CD8-positive, alpha-beta T cell (primary cell): ENCODE measurements at regions of chr4 and their contacts with region 1.

Region 1: DNA sequence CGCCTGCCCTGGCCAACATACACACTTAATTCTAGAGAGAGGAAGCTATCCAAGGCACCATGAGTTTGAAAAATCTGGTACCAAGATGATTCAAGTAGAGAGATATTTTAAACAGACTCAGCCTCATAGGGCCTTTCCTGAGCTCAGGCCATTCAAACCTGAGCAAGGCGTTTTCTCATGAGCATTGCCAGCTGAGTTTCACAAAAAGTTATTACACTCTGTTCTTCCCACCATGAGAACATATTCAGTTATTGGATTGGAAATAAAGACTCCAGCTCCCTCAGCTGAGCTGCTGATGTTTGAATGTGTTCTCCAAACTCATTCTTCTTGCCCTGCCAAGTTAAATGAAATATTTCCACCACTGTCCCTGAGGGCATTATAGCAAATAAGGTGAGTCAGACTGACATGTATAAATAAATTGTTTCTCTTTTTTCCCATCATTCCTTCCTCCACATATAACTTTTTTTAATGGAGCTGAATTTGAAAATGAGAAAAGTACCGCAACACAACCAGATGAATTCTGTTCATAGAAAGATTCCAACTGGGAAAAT is 429.6 kb downstream of the RAB28 start:
- DNase-seq: no peak
- ATAC-seq: no peak
- H3K4me3 ChIP-seq: no peak overlapping the region
- H3K4me3 Mint-ChIP-seq: no peak overlapping the region
- H3K27ac ChIP-seq: no peak overlapping the region
- H3K27ac Mint-ChIP-seq: no peak overlapping the region
- H3K4me1 ChIP-seq: no peaks in the 10 kb centered on the region
- H3K4me1 Mint-ChIP-seq: no peaks in the 10 kb centered on the region
- H3K27me3 ChIP-seq: no peaks in the 10 kb centered on the region
- H3K27me3 Mint-ChIP-seq: no peaks in the 10 kb centered on the region
- CTCF ChIP-seq: no peak

Region 2: DNA sequence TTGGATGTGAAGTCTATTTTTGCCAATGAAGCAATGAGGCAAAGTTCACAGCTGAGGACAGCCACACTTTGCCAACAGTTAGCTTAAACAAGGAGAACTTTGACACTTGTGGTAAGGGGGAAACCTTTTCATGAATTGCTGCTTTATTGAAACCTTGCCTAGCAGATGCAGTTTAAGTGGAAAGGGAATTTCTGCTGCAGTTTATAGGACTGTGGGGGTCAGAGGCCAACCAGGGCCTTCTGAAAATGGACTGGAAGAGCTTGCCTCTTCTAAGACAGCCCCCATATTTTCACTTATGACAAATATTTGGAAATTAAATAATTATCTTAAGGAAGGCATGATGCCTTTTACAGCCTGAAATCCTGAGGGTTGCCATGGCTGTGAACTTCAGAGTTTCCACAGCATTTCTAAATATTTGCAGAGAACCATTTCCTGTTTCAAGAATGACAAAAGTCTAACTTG is 120.7 kb before region 1 on chr4:
- CTCF ChIA-PET with region 1: no interaction called
- POLR2A ChIA-PET with region 1: no interaction called
- intact Hi-C with region 1: no loop called
- DNase-seq: no peak
- ATAC-seq: no peak
- H3K4me3 ChIP-seq: no peak overlapping the region
- H3K4me3 Mint-ChIP-seq: no peak overlapping the region
- H3K27ac ChIP-seq: no peak overlapping the region
- H3K27ac Mint-ChIP-seq: no peak overlapping the region
- H3K4me1 ChIP-seq: no peaks in the 10 kb centered on the region
- H3K4me1 Mint-ChIP-seq: no peaks in the 10 kb centered on the region
- H3K27me3 ChIP-seq: no peaks in the 10 kb centered on the region
- H3K27me3 Mint-ChIP-seq: no peaks in the 10 kb centered on the region
- CTCF ChIP-seq: no peak

Region 3: GRCh38 chr4:13126976-13127910 is 72.7 kb after region 1 on chr4:
- CTCF ChIA-PET with region 1: no interaction called
- POLR2A ChIA-PET with region 1: no interaction called
- intact Hi-C with region 1: loop called in 1 of 2 experiments (anchors 2 kb)
- DNase-seq: no peak
- ATAC-seq: no peak
- H3K4me3 ChIP-seq: no peak overlapping the region
- H3K4me3 Mint-ChIP-seq: no peak overlapping the region
- H3K27ac ChIP-seq: no peak overlapping the region
- H3K27ac Mint-ChIP-seq: no peak overlapping the region
- H3K4me1 ChIP-seq: no peaks in the 10 kb centered on the region
- H3K4me1 Mint-ChIP-seq: no peaks in the 10 kb centered on the region
- H3K27me3 ChIP-seq: no peaks in the 10 kb centered on the region
- H3K27me3 Mint-ChIP-seq: no peaks in the 10 kb centered on the region
- CTCF ChIP-seq: no peak